CD4-positive, alpha-beta T cell (primary cell): ENCODE measurements at regions of chr5 and their contacts with region 1.

Region 1: GRCh38 chr5:69334793-69335268 is 2.2 kb upstream of the CCDC125 start:
- DNase-seq: peak; percentile 63 to 88 (median 71)
- ATAC-seq: peak; percentile 73
- H3K4me3 ChIP-seq: no peak overlapping the region
- H3K4me3 Mint-ChIP-seq: peak overlapping the region; percentile 18
- H3K27ac ChIP-seq: no peak overlapping the region
- H3K27ac Mint-ChIP-seq: peak overlapping the region; percentile 77
- H3K4me1 ChIP-seq: peaks cover 26% of the 10 kb centered on the region
- H3K4me1 Mint-ChIP-seq: peaks cover 25% of the 10 kb centered on the region
- H3K27me3 ChIP-seq: no peaks in the 10 kb centered on the region
- H3K27me3 Mint-ChIP-seq: no peaks in the 10 kb centered on the region
- CTCF ChIP-seq: peak; percentile 61

Region 2: DNA sequence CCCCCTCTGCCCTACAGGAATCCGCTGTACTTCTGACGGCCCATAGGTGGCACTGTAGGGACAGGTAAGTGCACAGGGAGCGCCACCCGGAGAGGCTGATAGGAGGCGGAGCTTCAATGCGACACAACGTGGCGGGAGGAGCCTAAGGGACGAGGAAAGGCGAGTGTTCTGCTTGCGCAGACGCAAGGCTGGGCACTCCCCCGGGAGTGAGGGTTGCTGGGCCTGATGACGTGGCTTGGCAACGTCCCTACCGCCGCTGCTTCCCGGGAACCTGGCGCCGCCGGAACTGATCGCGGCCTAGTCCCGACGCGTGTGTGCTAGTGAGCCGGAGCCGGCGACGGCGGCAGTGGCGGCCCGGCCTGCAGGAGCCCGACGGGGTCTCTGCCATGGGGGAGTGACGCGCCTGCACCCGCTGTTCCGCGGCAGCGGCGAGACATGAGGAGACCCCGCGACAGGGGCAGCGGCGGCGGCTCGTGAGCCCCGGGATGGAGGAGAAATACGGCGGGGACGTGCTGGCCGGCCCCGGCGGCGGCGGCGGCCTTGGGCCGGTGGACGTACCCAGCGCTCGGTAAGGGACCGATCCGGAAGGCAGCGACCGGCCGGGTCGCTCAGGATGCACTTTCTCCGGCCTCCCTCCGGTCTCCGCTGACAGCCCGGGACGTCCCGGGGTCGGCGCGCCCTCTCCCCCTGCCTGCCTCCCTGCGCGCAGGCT is 240.9 kb before region 1 on chr5 and contains the start of gene SLC30A5:
- CTCF ChIA-PET with region 1: interaction called, 19 read pairs
- POLR2A ChIA-PET with region 1: interaction called, 20 read pairs
- intact Hi-C with region 1: loop called (anchors 1 kb)
- DNase-seq: peak; percentile 95 to 100 (median 97)
- ATAC-seq: peak; percentile 97
- H3K4me3 ChIP-seq: peak within 1 kb of the TSS; percentile 73
- H3K4me3 Mint-ChIP-seq: peak within 1 kb of the TSS; percentile 88
- H3K27ac ChIP-seq: peak within 1 kb of the TSS; percentile 77 to 90
- H3K27ac Mint-ChIP-seq: peak within 1 kb of the TSS; percentile 98
- H3K4me1 ChIP-seq: peaks cover 26% of the 10 kb centered on the region
- H3K4me1 Mint-ChIP-seq: peaks cover 45% of the 10 kb centered on the region
- H3K27me3 ChIP-seq: no peaks in the 10 kb centered on the region
- H3K27me3 Mint-ChIP-seq: no peaks in the 10 kb centered on the region
- CTCF ChIP-seq: peak; percentile 80
- total RNA-seq, gene SLC30A5: 16.9 to 17.2 TPM

Region 3: GRCh38 chr5:69189162-69190086 is 145.4 kb before region 1 on chr5 and contains the start of gene CENPH:
- CTCF ChIA-PET with region 1: interaction called, 7 read pairs
- POLR2A ChIA-PET with region 1: interaction called, 3 read pairs
- intact Hi-C with region 1: loop called in 1 of 2 experiments (anchors 10 kb)
- DNase-seq: peak; percentile 80 to 94 (median 88)
- ATAC-seq: peak; percentile 92
- H3K4me3 ChIP-seq: peak within 1 kb of the TSS; percentile 80
- H3K4me3 Mint-ChIP-seq: peak within 1 kb of the TSS; percentile 92
- H3K27ac ChIP-seq: peak within 1 kb of the TSS; percentile 64 to 68
- H3K27ac Mint-ChIP-seq: peak within 1 kb of the TSS; percentile 83
- H3K4me1 ChIP-seq: peaks cover 17% of the 10 kb centered on the region
- H3K4me1 Mint-ChIP-seq: peaks cover 17% of the 10 kb centered on the region
- H3K27me3 ChIP-seq: no peaks in the 10 kb centered on the region
- H3K27me3 Mint-ChIP-seq: no peaks in the 10 kb centered on the region
- CTCF ChIP-seq: no peak
- total RNA-seq, gene CENPH: 4.0 to 5.6 TPM

Region 4: DNA sequence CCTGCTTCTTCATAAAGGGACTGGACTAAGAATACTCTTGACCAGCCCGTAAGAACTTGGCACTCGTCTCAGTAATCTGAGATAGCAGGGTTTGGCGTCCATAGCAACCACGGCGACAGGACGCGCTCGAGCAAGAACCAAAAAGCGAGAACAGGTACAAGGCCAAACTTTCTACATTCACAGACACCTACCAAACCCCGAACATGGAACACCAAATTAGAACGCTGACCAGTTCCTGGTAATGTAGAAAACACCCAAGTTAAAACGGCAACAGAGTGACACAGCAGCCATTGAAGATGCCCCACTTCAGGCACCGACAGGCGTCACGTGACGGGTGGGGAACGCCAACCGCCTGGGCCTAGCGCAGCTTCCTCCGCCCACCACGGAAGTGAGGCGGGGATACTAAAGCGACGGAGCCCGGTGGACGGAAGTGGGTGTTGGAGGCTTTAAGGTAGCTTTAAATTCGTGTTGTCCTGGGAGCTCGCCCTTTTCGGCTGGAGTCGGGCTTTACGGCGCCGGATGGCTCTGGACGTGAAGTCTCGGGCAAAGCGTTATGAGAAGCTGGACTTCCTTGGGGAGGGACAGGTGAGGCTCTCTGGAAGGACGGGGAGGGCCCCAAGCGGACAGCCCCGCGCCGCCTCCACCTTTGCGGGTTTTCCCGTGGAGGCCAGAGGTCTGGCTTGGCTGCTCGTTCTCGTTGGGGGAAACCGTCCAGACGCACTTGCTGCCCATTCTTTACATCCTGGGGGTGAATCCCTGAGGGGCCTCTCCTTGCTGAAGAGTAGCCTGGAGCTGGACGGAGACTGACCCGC is 100.2 kb before region 1 on chr5 and contains the start of gene CDK7:
- CTCF ChIA-PET with region 1: interaction called, 9 read pairs
- POLR2A ChIA-PET with region 1: interaction called, 7 read pairs
- intact Hi-C with region 1: loop called (anchors 5 kb)
- DNase-seq: peak; percentile 80 to 96 (median 89)
- ATAC-seq: peak; percentile 99
- H3K4me3 ChIP-seq: peak within 1 kb of the TSS; percentile 90
- H3K4me3 Mint-ChIP-seq: peak within 1 kb of the TSS; percentile 95
- H3K27ac ChIP-seq: peak within 1 kb of the TSS; percentile 74 to 75
- H3K27ac Mint-ChIP-seq: peak within 1 kb of the TSS; percentile 86
- H3K4me1 ChIP-seq: peaks cover 23% of the 10 kb centered on the region
- H3K4me1 Mint-ChIP-seq: peaks cover 40% of the 10 kb centered on the region
- H3K27me3 ChIP-seq: no peaks in the 10 kb centered on the region
- H3K27me3 Mint-ChIP-seq: no peaks in the 10 kb centered on the region
- CTCF ChIP-seq: no peak
- total RNA-seq, gene CDK7: 30.1 to 33.0 TPM

Region 5: GRCh38 chr5:69317391-69317790 is 17.4 kb before region 1 on chr5:
- CTCF ChIA-PET with region 1: no interaction called
- POLR2A ChIA-PET with region 1: no interaction called
- intact Hi-C with region 1: no loop called
- DNase-seq: peak in 1 of 14 experiments; percentile 5
- ATAC-seq: no peak
- H3K4me3 ChIP-seq: no peak overlapping the region
- H3K4me3 Mint-ChIP-seq: no peak overlapping the region
- H3K27ac ChIP-seq: no peak overlapping the region
- H3K27ac Mint-ChIP-seq: no peak overlapping the region
- H3K4me1 ChIP-seq: no peaks in the 10 kb centered on the region
- H3K4me1 Mint-ChIP-seq: no peaks in the 10 kb centered on the region
- H3K27me3 ChIP-seq: no peaks in the 10 kb centered on the region
- H3K27me3 Mint-ChIP-seq: no peaks in the 10 kb centered on the region
- CTCF ChIP-seq: no peak

Region 6: GRCh38 chr5:69369369-69370121 is 34.7 kb after region 1 on chr5 and contains the starts of genes AK6, RAD17 and TAF9:
- CTCF ChIA-PET with region 1: interaction called, 3 read pairs
- POLR2A ChIA-PET with region 1: interaction called, 17 read pairs
- intact Hi-C with region 1: loop called (anchors 2 kb)
- DNase-seq: peak; percentile 83 to 95 (median 88)
- ATAC-seq: peak; percentile 86
- H3K4me3 ChIP-seq: peak within 1 kb of the TSS; percentile 90
- H3K4me3 Mint-ChIP-seq: peak within 1 kb of the TSS; percentile 99
- H3K27ac ChIP-seq: peak within 1 kb of the TSS; percentile 94 to 98
- H3K27ac Mint-ChIP-seq: peak within 1 kb of the TSS; percentile 98
- H3K4me1 ChIP-seq: peaks cover 20% of the 10 kb centered on the region
- H3K4me1 Mint-ChIP-seq: peaks cover 55% of the 10 kb centered on the region
- H3K27me3 ChIP-seq: no peaks in the 10 kb centered on the region
- H3K27me3 Mint-ChIP-seq: no peaks in the 10 kb centered on the region
- CTCF ChIP-seq: no peak
- total RNA-seq, gene AK6: 8.2 to 10.6 TPM
- total RNA-seq, gene RAD17: 15.7 to 19.1 TPM
- total RNA-seq, gene TAF9: 53.8 to 54.2 TPM